ENCODE measurements at regions of chr1 and their contacts with region 1.

Region 1: DNA sequence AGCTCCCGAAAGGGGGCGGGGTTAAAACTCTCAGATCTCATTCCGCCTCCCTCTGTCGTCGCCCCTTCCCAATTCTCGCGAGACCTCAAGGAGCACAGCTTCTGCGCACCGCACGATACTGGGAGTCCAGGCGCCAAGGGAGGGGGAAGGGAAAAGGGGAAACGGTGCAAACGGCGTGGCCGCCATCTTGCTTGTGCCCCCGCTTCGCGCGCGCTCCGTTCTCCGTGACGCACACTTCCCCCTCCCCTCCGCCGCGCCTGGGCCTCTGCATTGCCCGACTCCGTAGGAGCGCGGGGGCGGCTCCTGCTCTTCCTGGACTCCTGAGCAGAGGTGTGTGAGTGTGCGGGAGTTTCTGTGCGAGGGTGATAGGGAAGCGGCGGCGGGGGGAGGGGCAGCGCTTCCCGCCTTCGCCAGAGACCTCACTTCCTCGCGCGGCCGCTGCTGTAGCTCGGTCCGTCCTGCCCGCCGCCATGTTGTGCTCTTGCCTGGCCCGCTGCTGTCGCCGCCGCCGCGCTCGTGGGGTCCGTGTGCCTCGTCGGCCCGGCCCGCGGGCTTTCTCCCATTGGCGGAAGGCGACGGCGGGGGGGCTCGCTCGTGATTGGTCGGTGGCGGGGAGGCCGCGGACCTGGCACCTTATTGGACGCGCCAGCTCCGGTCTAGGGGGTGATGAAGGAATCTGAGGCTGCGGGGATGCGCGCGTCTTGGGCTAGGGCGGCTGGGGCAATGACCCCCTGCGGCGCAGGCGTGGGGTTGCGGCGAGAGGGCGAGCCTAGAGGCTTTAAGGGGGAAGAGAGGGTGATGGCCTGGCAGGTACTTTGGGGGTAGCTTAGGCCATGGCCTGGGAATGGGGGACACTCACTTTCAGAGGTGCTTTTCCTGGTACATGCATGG is at the start of gene NFYC:
- DNase-seq: peak; percentile 97 to 98
- ATAC-seq: peak; percentile 96 to 97
- H3K4me3 ChIP-seq: peak within 1 kb of the TSS; percentile 83 to 92 (median 86)
- H3K27ac ChIP-seq: peak within 1 kb of the TSS; percentile 95 to 99 (median 98)
- H3K4me1 ChIP-seq: peaks cover 33 to 34% of the 10 kb centered on the region in 2 donors
- H3K27me3 ChIP-seq: no peaks in the 10 kb centered on the region
- CTCF ChIP-seq: peak in 1 of 5 experiments; percentile 21
- POLR2A ChIP-seq: peak; percentile 95 to 96
- total RNA-seq, gene NFYC: 45.3 to 58.6 (median 57.4) TPM

Region 2: GRCh38 chr1:40668769-40669525 is 22.8 kb before region 1 on chr1:
- in situ Hi-C with region 1: no loop called
- intact Hi-C with region 1: loop called (anchors 2 kb)
- DNase-seq: peak; percentile 30 to 63
- ATAC-seq: peak; percentile 64 to 74
- H3K4me3 ChIP-seq: peak overlapping the region; percentile 32 to 44 (median 36)
- H3K27ac ChIP-seq: no peak overlapping the region
- H3K4me1 ChIP-seq: peaks cover 4 to 6% of the 10 kb centered on the region in 2 donors
- H3K27me3 ChIP-seq: no peaks in the 10 kb centered on the region
- CTCF ChIP-seq: peak; percentile 78 to 97 (median 83)
- POLR2A ChIP-seq: no peak

Region 3: GRCh38 chr1:40717955-40718354 is 26.2 kb after region 1 on chr1:
- in situ Hi-C with region 1: no loop called
- intact Hi-C with region 1: no loop called
- DNase-seq: no peak
- ATAC-seq: no peak
- H3K4me3 ChIP-seq: no peak overlapping the region
- H3K27ac ChIP-seq: peak overlapping the region; percentile 2 to 55 (median 9)
- H3K4me1 ChIP-seq: peaks cover 80 to 84% of the 10 kb centered on the region in 2 donors
- H3K27me3 ChIP-seq: no peaks in the 10 kb centered on the region
- CTCF ChIP-seq: no peak
- POLR2A ChIP-seq: no peak

Region 4: GRCh38 chr1:40783001-40783905 is 91.5 kb after region 1 on chr1 and contains the start of gene KCNQ4:
- in situ Hi-C with region 1: no loop called
- intact Hi-C with region 1: loop called (anchors 5 kb)
- DNase-seq: peak; percentile 67 to 79
- ATAC-seq: peak; percentile 77
- H3K4me3 ChIP-seq: peak within 1 kb of the TSS; percentile 50 to 61 (median 59)
- H3K27ac ChIP-seq: peak within 1 kb of the TSS; percentile 79 to 93 (median 85)
- H3K4me1 ChIP-seq: peaks cover 0 to 24% of the 10 kb centered on the region in 2 donors
- H3K27me3 ChIP-seq: no peaks in the 10 kb centered on the region
- CTCF ChIP-seq: no peak
- POLR2A ChIP-seq: peak; percentile 38 to 45
- total RNA-seq, gene KCNQ4: 2.9 to 8.2 (median 3.5) TPM

Region 5: DNA sequence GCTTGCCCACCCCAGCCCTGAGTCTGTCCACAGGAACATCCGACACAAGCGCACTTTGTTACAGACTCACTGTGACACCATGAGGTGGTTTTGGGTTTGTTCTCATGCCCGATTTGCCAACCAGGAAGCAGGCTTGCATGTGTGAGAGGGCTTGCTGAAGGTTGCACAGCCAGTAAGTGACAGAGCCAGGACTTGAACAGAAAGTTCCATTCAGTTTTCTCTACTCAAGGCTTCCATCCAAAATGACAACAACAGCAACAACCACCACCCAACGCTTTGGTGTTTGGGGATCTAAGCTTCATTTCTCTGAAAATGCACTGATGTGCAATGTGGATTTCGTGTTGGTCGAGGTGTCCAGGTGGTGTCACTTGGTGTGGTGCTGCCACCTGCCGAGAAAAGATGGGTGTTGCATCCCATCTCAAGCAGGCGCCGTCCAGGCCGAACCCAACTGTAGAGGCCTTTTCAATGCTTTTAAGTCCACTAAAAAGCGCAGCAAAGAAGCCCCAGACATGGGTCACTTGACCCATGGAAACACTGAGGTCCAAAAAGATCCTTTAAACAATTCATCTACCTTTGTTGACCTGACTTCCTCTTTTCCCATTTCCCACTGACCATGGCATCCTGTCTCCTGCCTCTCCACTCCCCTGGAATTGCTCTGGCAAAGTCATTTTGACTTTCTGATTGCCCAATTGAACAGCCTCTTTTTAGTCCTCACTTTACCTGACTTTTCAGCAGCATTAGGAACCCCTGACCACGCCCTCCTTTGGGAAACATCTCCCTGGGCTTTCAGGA is 158.2 kb after region 1 on chr1:
- in situ Hi-C with region 1: loop called in 1 of 4 experiments (anchors 10 kb)
- intact Hi-C with region 1: no loop called
- DNase-seq: peak; percentile 34 to 60
- ATAC-seq: peak; percentile 84
- H3K4me3 ChIP-seq: no peak overlapping the region
- H3K27ac ChIP-seq: no peak overlapping the region
- H3K4me1 ChIP-seq: no peaks in the 10 kb centered on the region
- H3K27me3 ChIP-seq: no peaks in the 10 kb centered on the region
- CTCF ChIP-seq: peak; percentile 89 to 94 (median 89)
- POLR2A ChIP-seq: no peak

Region 6: DNA sequence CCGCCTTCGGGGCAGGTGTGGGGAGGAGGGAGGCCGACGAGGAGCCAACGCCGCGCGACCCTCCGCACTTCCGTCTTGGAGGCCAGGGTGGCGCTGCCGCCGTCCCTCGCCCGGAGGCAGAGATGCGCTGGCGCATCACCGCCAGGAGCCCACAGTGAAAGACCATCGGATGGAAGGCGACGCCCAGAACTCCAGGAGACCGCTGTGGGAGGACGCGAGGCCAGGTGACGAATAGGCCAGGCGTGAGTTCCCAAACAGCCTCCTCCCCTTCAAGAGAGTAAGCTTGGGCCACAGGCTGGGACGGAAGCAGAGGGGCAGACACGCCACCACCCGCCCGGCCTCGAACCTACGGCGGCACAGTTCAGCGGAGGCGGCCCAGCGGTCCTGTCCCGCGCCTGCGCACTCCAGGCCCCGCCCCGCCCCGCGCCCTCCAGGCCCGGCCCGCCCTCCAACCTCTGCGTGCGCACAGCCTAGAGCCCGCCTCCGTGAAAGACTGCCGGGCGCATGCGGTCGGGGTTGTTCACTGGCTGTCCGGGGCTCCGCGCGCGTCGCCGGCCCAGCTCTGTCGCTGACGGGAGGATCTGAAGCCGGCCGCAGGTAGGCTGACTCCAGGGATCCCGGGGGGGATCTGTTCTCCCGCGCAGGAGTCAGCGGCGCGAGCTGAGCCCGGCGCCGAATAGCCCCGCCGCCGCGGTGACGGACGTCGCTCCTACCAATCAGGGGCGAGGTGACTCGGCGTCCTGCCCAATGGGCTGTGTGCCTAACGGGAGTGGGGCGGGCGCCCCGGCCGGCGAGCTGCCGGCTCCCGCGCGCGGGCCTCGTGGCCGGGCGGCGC is 287.7 kb after region 1 on chr1 and contains the start of gene CTPS1:
- in situ Hi-C with region 1: no loop called
- intact Hi-C with region 1: loop called (anchors 2 kb)
- DNase-seq: peak; percentile 91 to 93
- ATAC-seq: peak; percentile 97 to 98
- H3K4me3 ChIP-seq: peak within 1 kb of the TSS; percentile 65 to 93 (median 76)
- H3K27ac ChIP-seq: peak within 1 kb of the TSS; percentile 86 to 98 (median 95)
- H3K4me1 ChIP-seq: peaks cover 11 to 14% of the 10 kb centered on the region in 2 donors
- H3K27me3 ChIP-seq: no peaks in the 10 kb centered on the region
- CTCF ChIP-seq: no peak
- POLR2A ChIP-seq: peak; percentile 72 to 80
- total RNA-seq, gene CTPS1: 9.5 to 24.3 (median 14.7) TPM

Measured in gastrocnemius medialis (tissue), 4 donors.